ENCODE measurements at regions of chr15 and their contacts with region 1.

Region 1: DNA sequence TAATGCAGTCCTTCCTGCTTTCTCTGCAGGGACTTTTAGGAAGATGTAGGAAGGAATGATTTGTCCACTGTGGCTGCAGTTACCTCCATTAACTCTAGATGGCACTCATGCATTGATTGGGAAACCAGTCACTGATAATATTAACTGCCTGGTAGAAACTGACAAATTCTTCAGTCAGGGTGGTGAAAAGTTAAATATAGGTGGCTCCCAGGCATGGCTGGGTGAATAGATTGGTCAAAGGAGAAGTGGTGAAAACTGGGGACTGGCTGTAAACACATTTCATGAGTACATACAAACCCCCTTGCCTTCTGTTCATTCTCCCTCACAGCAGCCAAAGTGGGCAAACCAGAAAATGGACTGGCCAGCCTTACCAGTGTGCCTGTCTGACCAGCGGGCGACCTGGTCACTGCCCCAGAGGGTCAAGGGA is 333.4 kb downstream of the THSD4 start:
- DNase-seq: peak; percentile 90
- ATAC-seq: no peak
- H3K4me3 ChIP-seq: peak overlapping the region; percentile 52; the same call in 1 of the 2 replicates
- H3K27ac ChIP-seq: peak overlapping the region; percentile 99
- H3K4me1 ChIP-seq: peaks cover 52% of the 10 kb centered on the region
- H3K27me3 ChIP-seq: no peaks in the 10 kb centered on the region
- CTCF ChIP-seq: peak; percentile 87

Region 2: GRCh38 chr15:71114896-71115554 is 333.7 kb before region 1 on chr15 and contains the start of gene THSD4:
- CTCF ChIA-PET with region 1: no interaction called
- POLR2A ChIA-PET with region 1: interaction called, 3 read pairs
- intact Hi-C with region 1: loop called (anchors 2 kb)
- DNase-seq: peak; percentile 89
- ATAC-seq: peak; percentile 69
- H3K4me3 ChIP-seq: peak within 1 kb of the TSS; percentile 81
- H3K27ac ChIP-seq: peak within 1 kb of the TSS; percentile 98
- H3K4me1 ChIP-seq: peaks cover 68% of the 10 kb centered on the region
- H3K27me3 ChIP-seq: no peaks in the 10 kb centered on the region
- CTCF ChIP-seq: peak; percentile 92
- total RNA-seq, gene THSD4: 29.0 and 39.3 TPM in 2 replicates

Region 3: GRCh38 chr15:71532994-71533393 is 84.3 kb after region 1 on chr15:
- CTCF ChIA-PET with region 1: no interaction called
- POLR2A ChIA-PET with region 1: no interaction called
- intact Hi-C with region 1: loop called (anchors 5 kb)
- DNase-seq: peak; percentile 82
- ATAC-seq: peak; percentile 60
- H3K4me3 ChIP-seq: no peak overlapping the region
- H3K27ac ChIP-seq: no peak overlapping the region
- H3K4me1 ChIP-seq: peaks cover 13% of the 10 kb centered on the region
- H3K27me3 ChIP-seq: no peaks in the 10 kb centered on the region
- CTCF ChIP-seq: peak; percentile 91

Region 4: DNA sequence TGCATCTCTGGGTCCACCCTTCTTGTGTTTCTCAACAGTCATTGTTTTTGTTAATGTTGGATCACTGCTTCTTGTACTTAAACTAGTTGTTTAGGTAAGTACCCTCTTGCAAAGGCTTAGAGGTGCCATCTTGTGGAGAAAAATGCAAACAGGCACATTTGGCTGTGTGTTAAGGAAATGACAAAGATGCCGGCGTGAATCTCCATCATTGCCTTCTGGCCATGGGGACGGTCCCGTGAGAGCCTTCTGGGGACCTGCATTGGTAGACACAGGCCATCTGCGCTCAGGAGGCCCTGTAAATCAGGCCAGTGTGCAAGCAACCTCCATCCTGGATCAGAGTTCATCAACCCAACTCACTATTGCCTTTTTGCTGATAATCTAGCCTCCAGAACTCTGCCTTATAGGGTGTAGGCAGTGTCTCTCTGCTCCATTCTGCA is 203.1 kb after region 1 on chr15:
- CTCF ChIA-PET with region 1: no interaction called
- POLR2A ChIA-PET with region 1: no interaction called
- intact Hi-C with region 1: loop called (anchors 1 kb)
- DNase-seq: peak; percentile 75
- ATAC-seq: peak; percentile 64
- H3K4me3 ChIP-seq: no peak overlapping the region
- H3K27ac ChIP-seq: no peak overlapping the region
- H3K4me1 ChIP-seq: peaks cover 10% of the 10 kb centered on the region
- H3K27me3 ChIP-seq: no peaks in the 10 kb centered on the region
- CTCF ChIP-seq: peak; percentile 82

Region 5: GRCh38 chr15:71800835-71801745 is 352.4 kb after region 1 on chr15:
- CTCF ChIA-PET with region 1: no interaction called
- POLR2A ChIA-PET with region 1: no interaction called
- intact Hi-C with region 1: loop called (anchors 1 kb)
- DNase-seq: peak; percentile 88
- ATAC-seq: peak; percentile 83
- H3K4me3 ChIP-seq: no peak overlapping the region
- H3K27ac ChIP-seq: peak overlapping the region; percentile 75
- H3K4me1 ChIP-seq: peaks cover 18% of the 10 kb centered on the region
- H3K27me3 ChIP-seq: no peaks in the 10 kb centered on the region
- CTCF ChIP-seq: peak; percentile 88

Measured in PC-3 (cell line).